Psoas muscle (tissue), 8 donors: ENCODE measurements at regions of chr16 and their contacts with region 1.

Region 1: DNA sequence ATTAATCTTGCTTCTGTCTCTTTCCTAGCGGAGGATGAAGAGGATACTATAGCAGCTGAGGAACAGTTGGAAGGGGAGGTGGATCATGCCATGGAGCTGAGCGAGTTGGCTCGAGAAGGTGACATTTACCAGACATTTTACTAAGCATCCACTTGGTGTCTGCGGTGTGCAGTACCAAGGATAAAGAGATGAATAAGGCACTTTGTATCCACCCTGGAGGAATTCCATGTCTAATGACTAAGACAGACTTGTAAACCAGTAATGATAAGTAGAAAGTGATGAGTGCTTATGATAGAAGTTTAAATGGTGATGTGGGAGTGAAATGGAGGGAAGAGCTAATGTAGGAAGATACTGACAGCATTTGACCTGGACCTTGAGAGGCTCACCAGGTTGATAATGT is 12.0 kb downstream of the SRCAP start:
- DNase-seq: no peak
- ATAC-seq: no peak
- H3K4me3 ChIP-seq: no peak overlapping the region
- H3K27ac ChIP-seq: no peak overlapping the region
- H3K4me1 ChIP-seq: no peaks in the 10 kb centered on the region
- H3K27me3 ChIP-seq: no peaks in the 10 kb centered on the region
- CTCF ChIP-seq: no peak

Region 2: DNA sequence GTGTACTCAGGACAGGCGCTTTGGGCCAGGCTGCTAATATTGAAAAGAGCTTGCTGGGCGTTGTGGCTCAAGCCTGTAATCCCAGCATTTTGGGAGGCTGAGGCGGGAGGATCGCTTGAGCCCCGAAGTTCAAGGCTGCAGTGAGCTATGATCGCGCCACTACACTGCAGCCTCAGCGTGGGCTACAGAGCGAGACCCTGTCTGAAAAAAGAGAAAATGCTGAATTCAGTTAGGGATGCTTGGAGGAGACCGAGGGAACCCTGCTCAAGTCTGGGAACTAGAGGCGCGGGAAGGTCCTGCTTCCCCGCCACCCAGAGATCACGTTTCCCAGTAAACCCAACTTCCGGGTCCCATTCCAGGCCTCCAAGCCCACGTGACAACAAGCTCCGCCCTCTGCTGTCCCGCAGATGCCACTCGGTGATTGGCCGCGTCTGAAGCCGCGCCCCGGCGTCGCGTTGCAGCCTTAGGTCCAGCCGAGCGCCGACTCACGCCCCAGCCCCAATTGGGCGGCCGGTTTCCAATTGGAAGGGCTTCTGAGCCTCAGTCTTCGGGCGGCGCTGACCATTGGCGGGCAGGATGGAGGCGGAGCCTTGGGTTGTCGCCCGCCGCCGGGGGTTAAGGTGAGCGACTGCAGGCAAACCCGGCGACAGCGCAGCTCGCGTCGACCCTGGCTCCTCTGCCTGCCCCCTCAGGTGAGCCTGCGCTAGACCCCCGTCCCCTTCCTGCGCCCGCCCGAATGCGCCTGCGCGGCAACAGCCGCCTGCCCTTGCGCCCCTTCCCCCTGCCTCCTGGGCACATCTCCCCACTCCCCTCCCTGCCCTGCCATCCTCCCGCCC is 37.0 kb after region 1 on chr16 and contains the start of gene PHKG2:
- intact Hi-C with region 1: loop called (anchors 5 kb)
- DNase-seq: peak; percentile 100
- ATAC-seq: peak; percentile 97 to 99 (median 98)
- H3K4me3 ChIP-seq: peak within 1 kb of the TSS; percentile 78
- H3K27ac ChIP-seq: peak within 1 kb of the TSS; percentile 81
- H3K4me1 ChIP-seq: no peaks in the 10 kb centered on the region
- H3K27me3 ChIP-seq: no peaks in the 10 kb centered on the region
- CTCF ChIP-seq: no peak
- total RNA-seq, gene PHKG2: 10.1 to 13.5 (median 12.9) TPM